ENCODE measurements at regions of chr1 and their contacts with region 1.

Region 1: GRCh38 chr1:67489643-67490042 is 59.4 kb upstream of the SERBP1 start:
- DNase-seq: peak in 1 of 35 experiments; percentile 37
- ATAC-seq: no peak
- H3K4me3 ChIP-seq: no peak overlapping the region
- H3K4me3 Mint-ChIP-seq: no peak overlapping the region
- H3K27ac ChIP-seq: no peak overlapping the region
- H3K27ac Mint-ChIP-seq: no peak overlapping the region
- H3K4me1 ChIP-seq: no peaks in the 10 kb centered on the region
- H3K4me1 Mint-ChIP-seq: no peaks in the 10 kb centered on the region
- H3K27me3 ChIP-seq: no peaks in the 10 kb centered on the region
- H3K27me3 Mint-ChIP-seq: no peaks in the 10 kb centered on the region

Region 2: GRCh38 chr1:67664048-67664447 is 174.4 kb after region 1 on chr1:
- CTCF ChIA-PET with region 1: no interaction called
- POLR2A ChIA-PET with region 1: interaction called in 1 of 2 experiments, 10 read pairs
- DNase-seq: no peak
- ATAC-seq: no peak
- H3K4me3 ChIP-seq: no peak overlapping the region
- H3K4me3 Mint-ChIP-seq: no peak overlapping the region
- H3K27ac ChIP-seq: no peak overlapping the region
- H3K27ac Mint-ChIP-seq: no peak overlapping the region
- H3K4me1 ChIP-seq: no peaks in the 10 kb centered on the region
- H3K4me1 Mint-ChIP-seq: no peaks in the 10 kb centered on the region
- H3K27me3 ChIP-seq: no peaks in the 10 kb centered on the region
- H3K27me3 Mint-ChIP-seq: peaks cover 27 to 34% of the 10 kb centered on the region in 2 donors

Measured in T-cell (primary cell).